ENCODE measurements at regions of chr16 and their contacts with region 1.

Region 1: GRCh38 chr16:67028555-67029248 is at the start of gene CBFB:
- DNase-seq: peak; percentile 85
- ATAC-seq: peak; percentile 92
- H3K4me3 ChIP-seq: peak within 1 kb of the TSS; percentile 78 to 94
- H3K27ac ChIP-seq: peak within 1 kb of the TSS; percentile 97
- H3K4me1 ChIP-seq: peaks cover 12 to 24% of the 10 kb centered on the region in 2 experiments; a peak in 3 of 4 replicates
- H3K27me3 ChIP-seq: no peaks in the 10 kb centered on the region
- CTCF ChIP-seq: peak in 2 of 3 experiments; percentile 35 to 39; a peak in 3 of 6 replicates
- POLR2A ChIP-seq: peak; percentile 93
- RAD21 ChIP-seq: no peak
- total RNA-seq, gene CBFB: 101 TPM

Region 2: GRCh38 chr16:67091906-67092566 is 63.3 kb after region 1 on chr16:
- CTCF ChIA-PET with region 1: no interaction called
- POLR2A ChIA-PET with region 1: no interaction called
- RAD21 ChIA-PET with region 1: no interaction called
- intact Hi-C with region 1: loop called (anchors 5 kb)
- DNase-seq: no peak
- ATAC-seq: no peak
- H3K4me3 ChIP-seq: no peak overlapping the region
- H3K27ac ChIP-seq: no peak overlapping the region
- H3K4me1 ChIP-seq: no peaks in the 10 kb centered on the region
- H3K27me3 ChIP-seq: no peaks in the 10 kb centered on the region
- CTCF ChIP-seq: no peak
- POLR2A ChIP-seq: no peak
- RAD21 ChIP-seq: no peak

Region 3: DNA sequence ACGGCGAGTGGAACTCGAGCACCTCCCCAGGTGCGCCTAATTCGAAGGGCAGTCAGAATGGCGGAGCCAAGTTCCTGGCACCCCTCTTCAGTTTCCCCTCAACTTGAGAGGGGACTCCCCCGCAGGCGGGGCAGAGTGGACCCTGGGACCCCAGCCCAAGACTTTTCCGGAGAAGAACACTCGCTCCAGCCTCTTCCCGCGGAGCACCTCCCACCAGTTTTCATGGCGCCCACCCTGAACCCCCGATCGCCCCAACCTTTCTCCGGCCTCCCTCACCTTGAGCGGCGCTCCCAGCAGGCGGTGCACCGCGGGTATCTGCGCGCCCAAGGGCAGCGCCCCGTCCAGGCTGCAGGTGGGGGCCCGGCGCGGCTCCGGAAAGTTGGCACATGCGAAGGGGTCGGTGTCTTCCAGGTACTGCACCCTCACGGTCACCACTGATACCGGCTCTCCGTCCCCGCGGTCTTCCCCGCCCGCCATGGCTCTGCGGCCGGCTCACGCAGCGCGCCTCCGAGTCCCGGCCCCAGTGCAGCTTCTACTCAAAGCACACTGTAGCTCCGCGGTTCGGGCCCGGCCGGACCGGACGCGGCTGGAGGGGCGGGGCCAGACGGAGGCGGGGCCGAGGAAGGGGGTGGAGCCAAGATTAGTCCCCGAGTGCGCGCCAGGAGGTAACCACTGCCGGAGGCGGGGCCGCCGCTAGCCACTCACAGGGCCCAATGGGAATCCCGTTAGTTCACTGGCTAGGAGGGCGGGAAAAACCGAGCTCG is 218.4 kb after region 1 on chr16 and contains the start of gene FHOD1:
- CTCF ChIA-PET with region 1: no interaction called
- POLR2A ChIA-PET with region 1: no interaction called
- RAD21 ChIA-PET with region 1: no interaction called
- intact Hi-C with region 1: no loop called
- DNase-seq: peak; percentile 83
- ATAC-seq: peak; percentile 64
- H3K4me3 ChIP-seq: peak within 1 kb of the TSS; percentile 71 to 92
- H3K27ac ChIP-seq: peak within 1 kb of the TSS; percentile 92
- H3K4me1 ChIP-seq: peaks cover 39 to 67% of the 10 kb centered on the region in 2 experiments
- H3K27me3 ChIP-seq: no peaks in the 10 kb centered on the region
- CTCF ChIP-seq: no peak
- POLR2A ChIP-seq: peak; percentile 41
- RAD21 ChIP-seq: no peak
- total RNA-seq, gene FHOD1: 69.2 TPM